ENCODE measurements at regions of chr2 and their contacts with region 1.

Region 1: GRCh38 chr2:207473049-207473930 is 56.5 kb upstream of the CREB1 start:
- DNase-seq: peak; percentile 65
- H3K4me3 ChIP-seq: no peak overlapping the region
- H3K27ac ChIP-seq: no peak overlapping the region
- H3K27me3 ChIP-seq: no peaks in the 10 kb centered on the region
- CTCF ChIP-seq: peak; percentile 89

Region 2: DNA sequence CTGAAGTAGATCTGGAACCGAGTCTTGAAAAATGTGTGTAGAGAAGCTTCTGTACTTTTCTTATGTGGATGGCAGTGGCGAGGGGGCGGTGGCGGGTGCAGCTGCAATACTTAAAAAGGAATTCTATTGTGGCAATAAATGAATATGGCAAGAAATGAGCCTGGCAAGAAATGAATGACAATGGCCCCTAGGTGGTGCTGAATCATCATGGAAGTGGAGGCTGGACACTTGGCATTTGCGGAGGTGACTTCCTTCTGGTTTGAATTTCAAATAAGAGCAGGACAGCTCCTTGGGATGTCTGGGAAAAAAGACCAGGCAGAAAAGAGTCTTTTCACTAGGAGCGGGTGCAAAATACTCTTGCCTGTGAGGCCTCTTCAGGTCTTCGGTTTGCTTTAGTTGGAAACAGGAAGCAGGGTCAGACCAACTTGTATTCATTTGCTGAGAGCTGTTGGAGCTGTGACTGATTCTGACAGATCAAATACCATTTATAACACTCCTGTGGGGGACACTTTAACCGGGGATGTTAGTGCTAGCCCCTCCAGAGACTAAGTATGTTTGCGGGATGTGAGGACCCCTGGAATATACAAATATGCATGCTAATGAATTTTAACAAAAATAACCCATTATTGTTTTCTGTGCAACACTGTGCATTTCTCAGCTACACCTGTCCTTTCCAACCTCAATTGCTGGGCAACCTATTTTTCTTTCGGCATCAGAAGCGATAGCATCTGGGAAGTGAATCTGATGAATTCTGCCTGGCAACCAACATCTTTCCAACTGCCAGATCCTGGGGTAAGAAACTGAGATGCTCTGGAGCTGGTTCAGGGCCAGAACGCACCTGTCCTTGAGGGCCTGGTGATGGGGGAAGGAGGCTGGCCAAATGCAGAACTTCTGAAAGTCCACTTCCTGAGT is 672.5 kb before region 1 on chr2:
- CTCF ChIA-PET with region 1: interaction called, 38 read pairs
- POLR2A ChIA-PET with region 1: interaction called, 3 read pairs
- DNase-seq: peak; percentile 26
- H3K4me3 ChIP-seq: no peak overlapping the region
- H3K27ac ChIP-seq: no peak overlapping the region
- H3K27me3 ChIP-seq: no peaks in the 10 kb centered on the region
- CTCF ChIP-seq: peak; percentile 66

Region 3: DNA sequence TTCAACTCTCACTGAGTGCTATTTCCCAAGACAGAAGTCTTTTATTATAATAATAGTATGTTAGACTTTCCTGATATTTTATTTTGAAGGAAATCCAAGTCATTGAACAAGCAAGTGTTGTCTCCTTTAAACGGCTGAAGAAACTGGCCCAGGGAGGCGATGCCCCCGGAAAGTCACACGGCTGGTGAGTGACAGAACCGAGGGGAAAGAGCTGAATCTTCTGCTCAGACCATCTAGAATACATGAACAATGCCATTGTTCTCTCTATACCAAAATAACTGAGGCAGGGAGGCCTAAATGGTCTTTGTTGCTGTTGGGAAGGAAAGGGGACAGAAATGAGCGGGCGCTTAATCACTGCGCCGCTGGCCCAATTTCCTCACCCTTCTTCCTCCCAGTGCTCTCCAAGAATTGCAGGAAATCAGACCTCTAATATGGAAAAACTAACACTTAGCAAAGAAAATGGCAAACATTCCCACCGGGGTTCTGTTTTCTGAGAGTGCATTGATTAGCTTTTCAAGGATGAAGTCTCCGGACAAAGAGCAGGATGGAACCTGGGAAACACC is 409.1 kb before region 1 on chr2:
- CTCF ChIA-PET with region 1: interaction called, 13 read pairs
- POLR2A ChIA-PET with region 1: interaction called, 3 read pairs
- DNase-seq: no peak
- H3K4me3 ChIP-seq: no peak overlapping the region
- H3K27ac ChIP-seq: no peak overlapping the region
- H3K27me3 ChIP-seq: no peaks in the 10 kb centered on the region
- CTCF ChIP-seq: no peak

Region 4: DNA sequence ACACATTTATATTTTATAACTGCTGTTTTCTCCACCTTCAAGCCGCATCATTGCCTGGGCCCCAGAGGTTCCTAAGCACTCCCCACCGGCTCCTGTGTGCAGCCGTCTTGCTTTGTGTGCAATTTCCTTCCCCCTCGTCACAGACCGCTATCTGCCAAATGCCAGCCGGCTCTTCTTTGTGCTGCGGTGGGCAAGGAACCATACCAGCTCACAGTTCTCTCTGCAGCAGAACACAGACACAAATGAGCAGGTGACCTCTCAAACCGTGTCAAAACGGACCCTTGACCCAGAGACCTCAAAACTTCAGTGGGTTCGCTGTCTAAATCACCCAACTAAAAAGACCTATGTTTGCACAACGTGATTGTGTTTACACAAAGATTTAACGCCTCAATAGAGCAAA is 365.7 kb before region 1 on chr2:
- CTCF ChIA-PET with region 1: interaction called, 18 read pairs
- POLR2A ChIA-PET with region 1: no interaction called
- DNase-seq: no peak
- H3K4me3 ChIP-seq: no peak overlapping the region
- H3K27ac ChIP-seq: no peak overlapping the region
- H3K27me3 ChIP-seq: no peaks in the 10 kb centered on the region
- CTCF ChIP-seq: no peak

Region 5: DNA sequence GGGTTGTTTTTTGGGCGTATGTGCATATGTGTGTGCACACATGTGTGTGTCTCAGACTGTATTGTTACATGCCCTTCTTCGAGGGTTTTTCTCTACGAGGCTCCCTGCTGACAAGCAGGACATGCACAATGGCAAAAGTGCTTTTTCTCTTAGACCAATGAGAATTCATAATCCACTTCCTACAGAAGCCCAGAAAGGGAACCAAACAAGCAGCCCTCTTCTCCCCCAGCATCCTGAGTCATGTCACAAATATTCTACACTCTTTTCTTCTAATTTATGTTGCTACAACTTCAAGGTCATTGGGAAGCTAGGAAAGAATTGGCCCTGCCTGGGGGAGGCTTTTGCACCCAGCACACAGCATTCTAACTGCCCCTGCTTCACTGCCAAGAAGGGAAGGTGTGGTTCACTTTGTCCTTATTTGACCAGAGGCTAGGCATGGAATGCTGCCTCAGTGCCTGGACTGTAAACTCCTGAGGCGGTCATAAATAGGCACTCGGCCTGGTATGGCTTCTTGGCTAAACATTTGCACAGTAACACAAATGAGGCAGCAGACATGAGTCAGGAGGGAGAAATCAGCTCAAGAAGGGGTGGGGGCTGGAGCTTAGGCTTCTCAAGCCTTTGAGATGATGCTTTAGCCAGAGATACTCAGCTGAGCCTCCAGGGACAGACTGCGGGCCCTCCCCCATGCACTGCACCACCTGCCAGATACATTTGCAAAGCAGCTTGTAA is 214.9 kb before region 1 on chr2:
- CTCF ChIA-PET with region 1: interaction called, 9 read pairs
- POLR2A ChIA-PET with region 1: interaction called, 11 read pairs
- DNase-seq: peak; percentile 99
- H3K4me3 ChIP-seq: no peak overlapping the region
- H3K27ac ChIP-seq: peak overlapping the region; percentile 97
- H3K27me3 ChIP-seq: no peaks in the 10 kb centered on the region
- CTCF ChIP-seq: peak; percentile 30

Region 6: DNA sequence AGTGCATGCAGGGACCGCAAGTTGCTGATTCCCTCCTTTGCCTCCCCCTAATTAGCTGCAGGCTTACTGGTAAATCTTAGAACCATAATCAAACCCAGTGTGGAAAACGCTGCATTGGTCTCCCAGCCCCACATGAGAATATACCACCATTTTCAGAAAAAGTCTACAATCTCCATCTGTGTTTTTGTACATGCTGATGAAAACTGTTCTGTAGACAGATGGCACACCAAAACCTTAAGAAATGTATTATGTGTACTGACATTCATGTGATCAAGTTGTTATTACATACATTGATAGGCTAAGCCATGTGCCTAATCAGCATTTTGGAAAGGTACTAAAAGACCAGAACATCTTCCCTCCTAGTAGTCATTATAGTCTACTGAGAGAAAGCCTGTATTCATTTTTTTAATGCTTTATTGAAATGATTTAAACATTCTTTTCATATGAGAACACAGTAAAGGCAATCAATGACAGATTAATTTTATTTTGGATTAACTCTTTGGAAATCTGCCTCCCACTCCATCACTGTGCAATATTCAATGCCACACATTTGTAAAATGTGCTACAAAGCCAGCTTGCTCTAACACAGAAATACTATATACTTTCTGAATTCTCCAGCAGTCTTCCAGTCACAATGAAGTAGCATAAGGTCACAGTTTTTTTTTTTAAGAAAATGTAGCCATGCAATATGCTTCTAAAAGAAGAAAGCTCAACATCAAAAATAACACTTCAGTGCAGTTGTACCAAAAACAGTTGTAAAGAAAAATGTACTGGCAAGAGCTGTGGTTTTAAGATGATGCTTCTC is 691.9 kb after region 1 on chr2:
- CTCF ChIA-PET with region 1: no interaction called
- POLR2A ChIA-PET with region 1: no interaction called
- DNase-seq: no peak
- H3K4me3 ChIP-seq: no peak overlapping the region
- H3K27ac ChIP-seq: no peak overlapping the region
- H3K27me3 ChIP-seq: no peaks in the 10 kb centered on the region
- CTCF ChIP-seq: no peak